CD4-positive, alpha-beta memory T cell (primary cell): ENCODE measurements at regions of chr20 and their contacts with region 1.

Region 1: DNA sequence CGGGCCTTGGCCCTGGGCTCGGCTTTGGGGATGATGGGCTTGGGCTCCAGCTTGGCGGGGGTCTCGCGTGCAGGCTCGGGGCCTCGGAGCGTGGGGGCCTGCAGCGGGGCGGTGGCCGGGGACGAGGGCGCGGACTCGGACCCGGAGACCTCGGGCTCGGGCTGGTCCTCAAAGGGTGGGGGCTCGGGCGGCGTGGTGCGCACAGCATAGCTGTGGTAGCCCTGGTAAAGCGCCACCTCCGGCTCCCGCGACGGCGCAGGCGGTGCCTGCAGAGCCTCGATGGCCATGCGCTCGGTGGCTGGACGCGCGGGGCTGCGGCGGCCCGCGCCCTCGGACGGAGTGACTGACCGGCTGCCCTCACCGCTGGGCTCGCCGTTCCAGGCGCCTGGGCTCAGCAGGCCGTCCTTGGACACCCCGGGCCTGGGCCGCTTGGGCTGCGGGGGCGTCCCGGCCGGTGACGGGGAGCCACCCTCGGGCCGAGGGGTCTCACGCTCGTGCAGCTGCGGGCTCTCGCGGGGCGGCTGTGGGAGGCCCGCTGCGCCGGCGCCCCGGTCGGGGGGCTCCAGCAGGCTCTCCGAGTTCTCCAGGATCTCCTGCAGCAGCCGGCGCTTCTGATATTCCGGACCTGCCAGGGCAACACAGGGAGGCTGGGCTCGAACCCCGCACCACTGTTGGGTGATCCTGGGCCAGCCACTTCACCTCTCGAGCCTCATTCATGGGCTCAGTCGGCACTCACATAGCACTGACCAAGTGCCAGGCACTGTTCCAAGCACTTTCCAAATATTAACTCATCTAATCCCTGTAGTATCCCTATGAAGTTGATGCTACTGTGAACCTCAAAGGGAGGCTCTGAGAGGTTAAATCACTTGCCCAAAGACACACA is 71.0 kb downstream of the JPH2 start:
- DNase-seq: no peak
- H3K4me3 ChIP-seq: no peak overlapping the region
- H3K4me3 Mint-ChIP-seq: no peak overlapping the region
- H3K27ac ChIP-seq: no peak overlapping the region
- H3K27ac Mint-ChIP-seq: no peak overlapping the region
- H3K4me1 ChIP-seq: peaks cover 4% of the 10 kb centered on the region
- H3K4me1 Mint-ChIP-seq: peaks cover 2 to 5% (median 4%) of the 10 kb centered on the region in 4 donors
- H3K27me3 ChIP-seq: peaks cover 7% of the 10 kb centered on the region
- H3K27me3 Mint-ChIP-seq: peaks cover 26 to 37% of the 10 kb centered on the region in 2 donors

Region 2: GRCh38 chr20:44187051-44187762 is 71.2 kb after region 1 on chr20 and contains the start of gene JPH2:
- CTCF ChIA-PET with region 1: interaction called, 77 read pairs
- POLR2A ChIA-PET with region 1: no interaction called
- intact Hi-C with region 1: no loop called
- DNase-seq: no peak
- H3K4me3 ChIP-seq: no peak within 1 kb of the TSS
- H3K4me3 Mint-ChIP-seq: peak within 1 kb of the TSS in 3 of 8 donors; percentile 5 to 32 (median 15)
- H3K27ac ChIP-seq: no peak within 1 kb of the TSS
- H3K27ac Mint-ChIP-seq: no peak within 1 kb of the TSS
- H3K4me1 ChIP-seq: no peaks in the 10 kb centered on the region
- H3K4me1 Mint-ChIP-seq: peaks cover 1 to 11% (median 5%) of the 10 kb centered on the region in 4 donors
- H3K27me3 ChIP-seq: peaks cover 26% of the 10 kb centered on the region
- H3K27me3 Mint-ChIP-seq: peaks cover 41 to 51% of the 10 kb centered on the region in 2 donors
- total RNA-seq, gene JPH2: not detected

Region 3: DNA sequence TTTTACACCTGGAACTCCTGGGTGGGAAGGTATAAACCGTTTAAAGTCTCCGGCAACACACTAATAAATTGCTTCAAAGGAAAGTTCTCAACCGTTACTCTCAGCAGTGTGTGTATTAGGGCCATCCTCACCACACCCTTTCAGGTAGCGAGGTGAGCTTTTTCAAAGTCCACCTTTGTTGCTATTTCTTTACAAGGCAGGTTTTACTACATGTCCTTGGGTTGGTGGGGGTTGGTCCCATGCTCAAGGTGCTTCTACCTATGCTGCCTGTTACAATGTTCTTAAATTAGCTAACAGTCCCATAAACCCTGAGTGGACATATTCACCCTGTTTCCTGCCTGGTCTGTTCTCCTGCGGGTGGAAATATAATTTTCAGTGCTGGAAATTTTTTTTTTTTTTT is 107.7 kb after region 1 on chr20:
- CTCF ChIA-PET with region 1: no interaction called
- POLR2A ChIA-PET with region 1: no interaction called
- intact Hi-C with region 1: no loop called
- DNase-seq: no peak
- H3K4me3 ChIP-seq: no peak overlapping the region
- H3K4me3 Mint-ChIP-seq: no peak overlapping the region
- H3K27ac ChIP-seq: no peak overlapping the region
- H3K27ac Mint-ChIP-seq: peak overlapping the region in 2 of 7 donors; percentile 23 to 47
- H3K4me1 ChIP-seq: peaks cover 19% of the 10 kb centered on the region
- H3K4me1 Mint-ChIP-seq: peaks cover 17 to 27% (median 24%) of the 10 kb centered on the region in 4 donors
- H3K27me3 ChIP-seq: no peaks in the 10 kb centered on the region
- H3K27me3 Mint-ChIP-seq: no peaks in the 10 kb centered on the region

Region 4: GRCh38 chr20:44460795-44461141 is 344.8 kb after region 1 on chr20:
- CTCF ChIA-PET with region 1: no interaction called
- POLR2A ChIA-PET with region 1: no interaction called
- intact Hi-C with region 1: loop called (anchors 2 kb)
- DNase-seq: peak in 3 of 5 donors; percentile 6 to 9 (median 9)
- H3K4me3 ChIP-seq: no peak overlapping the region
- H3K4me3 Mint-ChIP-seq: no peak overlapping the region
- H3K27ac ChIP-seq: no peak overlapping the region
- H3K27ac Mint-ChIP-seq: no peak overlapping the region
- H3K4me1 ChIP-seq: no peaks in the 10 kb centered on the region
- H3K4me1 Mint-ChIP-seq: no peaks in the 10 kb centered on the region
- H3K27me3 ChIP-seq: no peaks in the 10 kb centered on the region
- H3K27me3 Mint-ChIP-seq: no peaks in the 10 kb centered on the region